ENCODE measurements at regions of chr5 and their contacts with region 1.

Region 1: DNA sequence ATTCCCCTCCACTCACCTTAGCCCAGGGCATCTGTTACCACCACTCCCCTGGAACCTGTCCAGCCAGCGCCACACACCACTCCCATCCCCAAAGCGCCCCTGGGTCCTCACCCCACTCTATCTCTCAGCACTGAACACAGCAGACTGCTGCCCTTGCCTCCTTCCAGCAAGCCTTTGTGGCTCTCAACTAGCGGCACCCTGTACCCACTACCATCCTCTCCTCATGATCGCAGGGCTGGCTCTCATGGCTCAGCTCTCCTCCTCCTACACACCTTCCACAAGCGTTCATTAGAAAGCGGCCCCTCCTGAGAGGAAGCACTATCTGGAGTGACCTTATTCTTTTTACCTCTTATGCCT is 13.3 kb upstream of the BASP1 start:
- DNase-seq: no peak
- ATAC-seq: no peak
- H3K4me3 ChIP-seq: no peak overlapping the region
- H3K27ac ChIP-seq: no peak overlapping the region
- H3K4me1 ChIP-seq: no peaks in the 10 kb centered on the region
- H3K27me3 ChIP-seq: no peaks in the 10 kb centered on the region
- CTCF ChIP-seq: no peak

Region 2: DNA sequence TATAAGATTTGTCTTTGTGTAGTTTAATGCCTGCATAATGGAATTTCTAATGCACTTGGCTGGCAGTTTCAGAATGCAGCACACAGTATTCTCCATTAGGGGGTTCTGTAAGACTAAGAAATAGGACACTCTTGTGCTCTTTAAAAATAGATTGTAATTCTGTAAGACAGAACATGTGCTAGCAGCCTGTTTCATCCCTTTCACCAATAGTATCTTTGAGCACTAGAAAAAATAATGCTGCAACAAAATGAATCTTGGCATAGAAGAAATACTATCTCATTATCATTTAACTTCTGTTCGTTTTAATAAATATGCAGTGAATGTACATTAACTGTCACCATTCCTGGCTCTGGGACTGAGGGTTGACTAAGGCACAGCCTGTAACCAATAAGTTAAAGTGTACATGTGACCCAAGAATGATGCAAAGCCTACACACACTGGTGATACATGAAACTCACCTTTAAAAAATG is 714.8 kb before region 1 on chr5:
- CTCF ChIA-PET with region 1: no interaction called
- POLR2A ChIA-PET with region 1: no interaction called
- intact Hi-C with region 1: loop called (anchors 5 kb)
- DNase-seq: peak; percentile 84
- ATAC-seq: peak; percentile 85
- H3K4me3 ChIP-seq: no peak overlapping the region
- H3K27ac ChIP-seq: no peak overlapping the region
- H3K4me1 ChIP-seq: no peaks in the 10 kb centered on the region
- H3K27me3 ChIP-seq: no peaks in the 10 kb centered on the region
- CTCF ChIP-seq: peak; percentile 99

Region 3: GRCh38 chr5:16552666-16553343 is 651.3 kb before region 1 on chr5:
- CTCF ChIA-PET with region 1: no interaction called
- POLR2A ChIA-PET with region 1: no interaction called
- intact Hi-C with region 1: loop called (anchors 5 kb)
- DNase-seq: peak; percentile 95
- ATAC-seq: peak; percentile 99
- H3K4me3 ChIP-seq: no peak overlapping the region
- H3K27ac ChIP-seq: no peak overlapping the region
- H3K4me1 ChIP-seq: 0 out of 2 replicates have a peak, but pooled peaks cover 3% of the 10 kb centered on the region
- H3K27me3 ChIP-seq: no peaks in the 10 kb centered on the region
- CTCF ChIP-seq: peak; percentile 100

Region 4: GRCh38 chr5:16690243-16690852 is 513.8 kb before region 1 on chr5:
- CTCF ChIA-PET with region 1: no interaction called
- POLR2A ChIA-PET with region 1: no interaction called
- intact Hi-C with region 1: loop called (anchors 2 kb)
- DNase-seq: peak; percentile 87
- ATAC-seq: peak; percentile 90
- H3K4me3 ChIP-seq: no peak overlapping the region
- H3K27ac ChIP-seq: no peak overlapping the region
- H3K4me1 ChIP-seq: no peaks in the 10 kb centered on the region
- H3K27me3 ChIP-seq: no peaks in the 10 kb centered on the region
- CTCF ChIP-seq: peak; percentile 98

Region 5: GRCh38 chr5:17069995-17070511 is 134.1 kb before region 1 on chr5:
- CTCF ChIA-PET with region 1: no interaction called
- POLR2A ChIA-PET with region 1: no interaction called
- intact Hi-C with region 1: no loop called
- DNase-seq: peak; percentile 97
- ATAC-seq: peak; percentile 48
- H3K4me3 ChIP-seq: no peak overlapping the region
- H3K27ac ChIP-seq: peak overlapping the region; percentile 12
- H3K4me1 ChIP-seq: peaks cover 27% of the 10 kb centered on the region
- H3K27me3 ChIP-seq: no peaks in the 10 kb centered on the region
- CTCF ChIP-seq: no peak

Region 6: GRCh38 chr5:17228821-17229291 is 24.7 kb after region 1 on chr5:
- CTCF ChIA-PET with region 1: no interaction called
- POLR2A ChIA-PET with region 1: no interaction called
- intact Hi-C with region 1: no loop called
- DNase-seq: no peak
- ATAC-seq: no peak
- H3K4me3 ChIP-seq: no peak overlapping the region
- H3K27ac ChIP-seq: no peak overlapping the region
- H3K4me1 ChIP-seq: peaks cover 21% of the 10 kb centered on the region
- H3K27me3 ChIP-seq: no peaks in the 10 kb centered on the region
- CTCF ChIP-seq: no peak

Measured in PC-3 (cell line).